IMR-90 (cell line): ENCODE measurements at regions of chr19 and their contacts with region 1.

Region 1: DNA sequence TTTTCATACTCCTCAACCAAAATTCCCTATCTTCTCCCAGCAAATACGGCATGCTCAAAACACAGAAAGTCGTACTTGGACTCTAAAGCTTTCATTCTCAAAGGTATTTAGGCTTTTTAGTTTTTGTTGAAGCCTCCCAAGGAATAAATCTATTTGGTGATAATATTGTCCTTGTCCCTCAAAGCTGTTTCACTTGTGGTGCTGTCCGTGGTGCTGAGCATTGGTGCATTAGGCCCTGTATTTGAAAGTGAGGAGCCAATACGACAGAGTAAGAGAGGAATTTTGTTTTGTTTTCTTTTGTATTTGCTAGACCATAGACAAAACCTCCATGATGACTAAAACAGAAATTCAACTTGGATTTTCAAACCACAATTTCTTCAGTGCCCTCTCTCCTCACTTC is 3.2 kb upstream of the LGALS13 start:
- DNase-seq: peak; percentile 27
- ATAC-seq: no peak
- H3K4me3 ChIP-seq: no peak overlapping the region
- H3K27ac ChIP-seq: no peak overlapping the region
- H3K4me1 ChIP-seq: no peaks in the 10 kb centered on the region
- H3K27me3 ChIP-seq: no peaks in the 10 kb centered on the region
- CTCF ChIP-seq: no peak
- POLR2A ChIP-seq: no peak
- RAD21 ChIP-seq: no peak

Region 2: DNA sequence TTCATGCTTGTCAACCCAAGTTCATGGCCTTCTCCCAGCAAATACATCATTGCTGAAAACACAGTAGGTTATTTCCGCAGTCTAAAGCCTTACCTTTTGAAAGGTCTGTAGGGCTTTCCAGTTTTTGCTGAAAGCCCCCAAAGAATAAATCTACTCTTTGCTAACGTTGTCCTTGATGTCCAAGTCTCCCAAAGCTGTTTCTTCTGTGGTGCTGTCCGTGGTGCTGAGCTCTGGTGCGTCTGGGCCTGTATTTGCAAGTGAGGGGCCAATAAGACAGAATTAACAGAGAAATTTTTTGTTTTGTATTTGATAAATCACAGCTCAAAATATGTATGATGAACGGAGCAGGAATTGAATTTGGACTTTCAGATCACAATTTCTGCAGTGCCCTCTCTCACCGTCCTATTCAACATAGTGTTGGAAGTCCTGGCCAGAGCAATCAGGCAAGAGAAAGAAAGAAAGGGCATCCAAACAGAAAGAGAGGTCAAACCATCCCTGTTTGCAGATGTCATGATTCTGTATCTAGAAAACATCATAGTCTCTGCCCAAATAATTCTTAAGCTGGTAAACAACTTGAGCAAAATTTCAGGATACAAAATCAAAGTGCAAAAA is 46.8 kb after region 1 on chr19:
- CTCF ChIA-PET with region 1: no interaction called
- POLR2A ChIA-PET with region 1: no interaction called
- dilution Hi-C with region 1: no loop called
- in situ Hi-C with region 1: no loop called
- intact Hi-C with region 1: loop called (anchors 2 kb)
- DNase-seq: peak; percentile 15
- ATAC-seq: peak; percentile 53; the same call in 1 of the 2 replicates
- H3K4me3 ChIP-seq: no peak overlapping the region
- H3K27ac ChIP-seq: no peak overlapping the region
- H3K4me1 ChIP-seq: no peaks in the 10 kb centered on the region
- H3K27me3 ChIP-seq: no peaks in the 10 kb centered on the region
- CTCF ChIP-seq: no peak
- POLR2A ChIP-seq: no peak
- RAD21 ChIP-seq: no peak